ENCODE measurements at regions of chr7 and their contacts with region 1.

Region 1: DNA sequence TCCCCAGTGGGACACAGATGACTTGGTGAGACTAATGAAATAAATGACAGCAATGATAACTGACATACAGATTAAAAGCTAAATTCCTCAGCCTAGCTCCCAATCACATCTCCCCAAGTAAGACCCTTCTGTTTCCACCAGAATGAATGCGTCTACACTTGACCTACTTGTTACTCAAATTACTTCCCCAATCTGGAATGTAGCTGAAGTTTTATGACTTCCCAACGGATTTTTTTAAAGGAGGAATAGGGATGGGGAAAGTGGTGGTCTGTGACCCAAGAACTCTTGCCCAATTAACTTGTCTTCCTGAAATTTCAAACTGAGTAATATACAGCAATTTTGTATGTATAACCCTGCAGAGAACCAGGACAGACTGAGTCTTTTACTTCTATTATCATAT is 9.1 kb downstream of the H2AZ2 start:
- DNase-seq: no peak
- ATAC-seq: no peak
- H3K4me3 ChIP-seq: no peak overlapping the region
- H3K27ac ChIP-seq: no peak overlapping the region
- H3K4me1 ChIP-seq: peaks cover 0 to 29% (median 14%) of the 10 kb centered on the region in 12 donors
- H3K27me3 ChIP-seq: no peaks in the 10 kb centered on the region
- CTCF ChIP-seq: no peak
- POLR2A ChIP-seq: no peak

Region 2: GRCh38 chr7:44706788-44707560 is 131.8 kb before region 1 on chr7:
- intact Hi-C with region 1: loop called in 1 of 10 experiments (anchors 10 kb)
- DNase-seq: peak in 1 of 5 donors; percentile 48
- ATAC-seq: peak in 3 of 4 donors; percentile 42 to 74 (median 59)
- H3K4me3 ChIP-seq: no peak overlapping the region
- H3K27ac ChIP-seq: peak overlapping the region in 5 of 12 donors; percentile 15 to 69 (median 26)
- H3K4me1 ChIP-seq: peaks cover 0 to 21% (median 0%) of the 10 kb centered on the region in 12 donors
- H3K27me3 ChIP-seq: no peaks in the 10 kb centered on the region
- CTCF ChIP-seq: no peak
- POLR2A ChIP-seq: no peak

Region 3: GRCh38 chr7:44787041-44787440 is 51.7 kb before region 1 on chr7:
- intact Hi-C with region 1: no loop called
- DNase-seq: no peak
- ATAC-seq: no peak
- H3K4me3 ChIP-seq: no peak overlapping the region
- H3K27ac ChIP-seq: no peak overlapping the region
- H3K4me1 ChIP-seq: no peaks in the 10 kb centered on the region
- H3K27me3 ChIP-seq: no peaks in the 10 kb centered on the region
- CTCF ChIP-seq: no peak
- POLR2A ChIP-seq: no peak

Region 4: GRCh38 chr7:44797329-44798251 is 41.2 kb before region 1 on chr7:
- intact Hi-C with region 1: loop called in 2 of 10 experiments (anchors 5 kb)
- DNase-seq: peak; percentile 91 to 94 (median 92)
- ATAC-seq: peak; percentile 79 to 89 (median 82)
- H3K4me3 ChIP-seq: peak overlapping the region; percentile 60 to 97 (median 80)
- H3K27ac ChIP-seq: peak overlapping the region; percentile 95 to 100 (median 98)
- H3K4me1 ChIP-seq: peaks cover 7 to 35% (median 23%) of the 10 kb centered on the region in 12 donors
- H3K27me3 ChIP-seq: no peaks in the 10 kb centered on the region
- CTCF ChIP-seq: peak in 11 of 12 donors; percentile 21 to 66 (median 53)
- POLR2A ChIP-seq: peak in 1 of 2 donors; percentile 24

Region 5: DNA sequence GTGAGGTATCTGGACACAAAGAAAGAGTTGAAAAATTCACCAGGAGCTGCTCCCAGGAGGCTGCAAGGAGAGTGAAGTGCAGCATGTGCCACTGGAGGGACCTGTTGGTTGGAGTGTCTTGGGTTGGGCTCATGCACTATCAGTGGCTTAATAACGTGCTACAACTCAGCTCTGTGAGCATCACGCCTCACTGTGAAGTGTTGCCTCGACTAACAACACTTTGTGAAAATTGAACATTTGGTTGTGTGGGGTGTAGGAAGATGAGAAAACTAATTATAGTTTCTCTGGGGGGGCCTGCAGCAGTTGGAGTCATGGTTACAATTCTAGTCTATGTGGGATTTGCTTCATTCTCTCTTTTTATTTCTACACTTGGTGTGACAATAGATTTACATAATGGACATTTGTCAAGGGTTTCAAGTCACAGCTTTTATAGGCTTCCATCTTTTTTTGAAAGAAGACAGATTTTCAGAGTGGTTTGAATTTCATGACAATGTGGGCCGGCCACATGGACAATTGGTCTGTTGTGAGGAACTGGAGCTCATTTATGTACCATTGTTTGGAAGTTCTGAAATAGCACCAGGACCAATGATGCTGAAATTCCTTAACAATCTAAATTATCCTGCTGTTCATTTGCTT is 440.1 kb after region 1 on chr7:
- intact Hi-C with region 1: no loop called
- DNase-seq: no peak
- ATAC-seq: no peak
- H3K4me3 ChIP-seq: no peak overlapping the region
- H3K27ac ChIP-seq: no peak overlapping the region
- H3K4me1 ChIP-seq: no peaks in the 10 kb centered on the region
- H3K27me3 ChIP-seq: peaks cover 0 to 2% (median 0%) of the 10 kb centered on the region in 9 donors
- CTCF ChIP-seq: no peak
- POLR2A ChIP-seq: no peak

Measured in heart left ventricle (tissue), 16 donors.